GM12878 (cell line): ENCODE measurements at regions of chr3 and their contacts with region 1.

Region 1: GRCh38 chr3:138186803-138187295 is 252 bp upstream of the ARMC8 start:
- DNase-seq: peak; percentile 54
- ATAC-seq: peak; percentile 94
- H3K4me3 ChIP-seq: peak overlapping the region; percentile 90
- H3K27ac ChIP-seq: peak overlapping the region; percentile 99
- H3K4me1 ChIP-seq: no peaks in the 10 kb centered on the region
- H3K27me3 ChIP-seq: no peaks in the 10 kb centered on the region
- CTCF ChIP-seq: no peak
- EP300 ChIP-seq: no peak
- POLR2A ChIP-seq: no peak
- RAD21 ChIP-seq: no peak

Region 2: GRCh38 chr3:138174421-138175122 is 12.3 kb before region 1 on chr3 and contains the start of gene DBR1:
- CTCF ChIA-PET with region 1: interaction called, 12 read pairs
- POLR2A ChIA-PET with region 1: interaction called, 20 read pairs
- RAD21 ChIA-PET with region 1: interaction called, 6 read pairs
- SMC1A ChIA-PET with region 1: interaction called, 34 read pairs
- in situ Hi-C with region 1: no loop called
- intact Hi-C with region 1: no loop called
- DNase-seq: peak; percentile 50
- ATAC-seq: peak; percentile 93
- H3K4me3 ChIP-seq: peak within 1 kb of the TSS; percentile 96
- H3K27ac ChIP-seq: peak within 1 kb of the TSS; percentile 75
- H3K4me1 ChIP-seq: no peaks in the 10 kb centered on the region; the same call in none of the 2 replicates
- H3K27me3 ChIP-seq: no peaks in the 10 kb centered on the region
- CTCF ChIP-seq: no peak
- EP300 ChIP-seq: no peak
- POLR2A ChIP-seq: peak; percentile 97
- RAD21 ChIP-seq: no peak
- polyA plus RNA-seq, gene DBR1: 4.1 to 8.0 TPM